Heart right ventricle (tissue), 16 donors: ENCODE measurements at regions of chr10 and their contacts with region 1.

Region 1: GRCh38 chr10:124301736-124302135 is 117.0 kb downstream of the OAT start:
- DNase-seq: no peak
- ATAC-seq: no peak
- H3K4me3 ChIP-seq: no peak overlapping the region
- H3K27ac ChIP-seq: no peak overlapping the region
- H3K4me1 ChIP-seq: peaks cover 0 to 10% (median 0%) of the 10 kb centered on the region in 9 donors
- H3K27me3 ChIP-seq: no peaks in the 10 kb centered on the region
- CTCF ChIP-seq: no peak

Region 2: DNA sequence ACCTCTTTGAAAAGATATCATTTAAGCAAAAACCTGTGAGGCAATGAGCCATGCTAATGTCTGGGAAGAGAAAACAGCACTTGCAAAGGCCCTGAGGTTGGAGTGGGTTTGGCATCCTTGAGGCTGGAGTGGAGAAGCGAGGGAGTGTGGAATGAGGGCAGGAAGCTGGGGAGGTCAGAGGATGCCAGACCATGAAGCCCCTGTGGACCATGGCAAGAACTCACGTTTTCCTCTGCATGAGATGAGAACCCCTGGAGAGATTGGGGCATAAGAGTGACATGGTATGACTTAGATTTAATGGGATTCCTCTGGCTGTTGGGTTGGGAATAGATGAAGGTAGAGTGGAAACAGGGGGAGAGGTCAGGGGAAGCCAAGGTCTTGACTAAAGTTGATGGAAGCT is 586.2 kb before region 1 on chr10:
- intact Hi-C with region 1: loop called in 1 of 10 experiments (anchors 5 kb)
- DNase-seq: no peak
- ATAC-seq: no peak
- H3K4me3 ChIP-seq: no peak overlapping the region
- H3K27ac ChIP-seq: no peak overlapping the region
- H3K4me1 ChIP-seq: no peaks in the 10 kb centered on the region
- H3K27me3 ChIP-seq: peaks cover 0 to 4% (median 0%) of the 10 kb centered on the region in 7 donors
- CTCF ChIP-seq: no peak